MCF 10A (cell line): ENCODE measurements at regions of chr22 and their contacts with region 1.

Region 1: GRCh38 chr22:41256254-41256897 is 15.6 kb upstream of the CHADL start:
- DNase-seq: peak; percentile 89
- H3K4me3 Mint-ChIP-seq: no peak overlapping the region
- H3K27ac Mint-ChIP-seq: peak overlapping the region; percentile 75
- H3K4me1 Mint-ChIP-seq: peaks cover 9% of the 10 kb centered on the region
- H3K27me3 Mint-ChIP-seq: no peaks in the 10 kb centered on the region
- CTCF ChIP-seq: peak; percentile 35

Region 2: DNA sequence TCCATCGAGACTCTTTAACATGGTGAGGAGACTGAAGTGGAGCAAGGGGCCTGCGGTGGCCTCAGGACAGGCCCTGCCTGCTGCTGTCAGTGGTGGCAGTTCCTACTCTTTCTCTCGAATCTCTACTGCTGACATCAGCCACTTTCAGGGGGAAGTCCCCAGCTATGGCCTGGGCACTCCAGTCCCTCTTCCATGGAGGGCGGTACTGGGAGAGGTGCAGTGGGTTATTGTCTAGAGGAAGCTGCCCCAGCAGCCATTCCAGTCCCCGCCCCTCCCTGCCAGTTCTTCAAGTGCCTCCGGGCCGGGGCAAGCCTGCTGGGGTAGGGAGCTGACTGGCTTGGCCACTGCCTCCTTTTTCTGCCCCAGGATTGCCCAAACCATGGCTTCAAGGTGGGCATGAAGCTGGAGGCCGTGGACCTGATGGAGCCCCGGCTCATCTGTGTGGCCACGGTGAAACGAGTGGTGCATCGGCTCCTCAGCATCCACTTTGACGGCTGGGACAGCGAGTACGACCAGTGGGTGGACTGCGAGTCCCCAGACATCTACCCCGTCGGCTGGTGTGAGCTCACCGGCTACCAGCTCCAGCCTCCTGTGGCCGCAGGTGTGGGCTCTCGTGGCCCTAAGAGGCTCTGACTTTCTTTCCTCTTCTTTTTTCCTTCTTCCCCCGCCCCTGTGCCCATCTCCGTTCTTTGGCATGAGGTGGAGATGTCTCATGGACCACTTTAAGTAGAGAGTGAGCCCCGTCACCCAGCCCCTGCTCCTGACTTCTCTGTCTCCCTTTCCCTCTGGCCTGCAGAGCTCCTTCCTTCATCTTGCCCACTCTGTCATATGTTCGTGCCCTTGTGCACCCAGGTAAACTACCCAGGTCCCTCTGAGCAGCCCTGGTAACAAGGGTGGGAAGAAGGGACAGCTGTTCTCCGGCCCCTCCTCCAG is 29.4 kb before region 1 on chr22:
- CTCF ChIA-PET with region 1: no interaction called
- POLR2A ChIA-PET with region 1: no interaction called
- intact Hi-C with region 1: no loop called
- DNase-seq: no peak
- H3K4me3 Mint-ChIP-seq: no peak overlapping the region
- H3K27ac Mint-ChIP-seq: no peak overlapping the region
- H3K4me1 Mint-ChIP-seq: no peaks in the 10 kb centered on the region
- H3K27me3 Mint-ChIP-seq: no peaks in the 10 kb centered on the region
- CTCF ChIP-seq: no peak

Region 3: GRCh38 chr22:41301105-41302020 is 45.0 kb after region 1 on chr22 and contains the start of gene ZC3H7B:
- CTCF ChIA-PET with region 1: interaction called, 5 read pairs
- POLR2A ChIA-PET with region 1: interaction called, 3 read pairs
- intact Hi-C with region 1: loop called (anchors 1 kb)
- DNase-seq: peak; percentile 82
- H3K4me3 Mint-ChIP-seq: peak within 1 kb of the TSS; percentile 75
- H3K27ac Mint-ChIP-seq: peak within 1 kb of the TSS; percentile 90
- H3K4me1 Mint-ChIP-seq: peaks cover 26% of the 10 kb centered on the region
- H3K27me3 Mint-ChIP-seq: no peaks in the 10 kb centered on the region
- CTCF ChIP-seq: peak; percentile 38
- total RNA-seq, gene ZC3H7B: 42.9 and 53.4 TPM in 2 replicates

Region 4: DNA sequence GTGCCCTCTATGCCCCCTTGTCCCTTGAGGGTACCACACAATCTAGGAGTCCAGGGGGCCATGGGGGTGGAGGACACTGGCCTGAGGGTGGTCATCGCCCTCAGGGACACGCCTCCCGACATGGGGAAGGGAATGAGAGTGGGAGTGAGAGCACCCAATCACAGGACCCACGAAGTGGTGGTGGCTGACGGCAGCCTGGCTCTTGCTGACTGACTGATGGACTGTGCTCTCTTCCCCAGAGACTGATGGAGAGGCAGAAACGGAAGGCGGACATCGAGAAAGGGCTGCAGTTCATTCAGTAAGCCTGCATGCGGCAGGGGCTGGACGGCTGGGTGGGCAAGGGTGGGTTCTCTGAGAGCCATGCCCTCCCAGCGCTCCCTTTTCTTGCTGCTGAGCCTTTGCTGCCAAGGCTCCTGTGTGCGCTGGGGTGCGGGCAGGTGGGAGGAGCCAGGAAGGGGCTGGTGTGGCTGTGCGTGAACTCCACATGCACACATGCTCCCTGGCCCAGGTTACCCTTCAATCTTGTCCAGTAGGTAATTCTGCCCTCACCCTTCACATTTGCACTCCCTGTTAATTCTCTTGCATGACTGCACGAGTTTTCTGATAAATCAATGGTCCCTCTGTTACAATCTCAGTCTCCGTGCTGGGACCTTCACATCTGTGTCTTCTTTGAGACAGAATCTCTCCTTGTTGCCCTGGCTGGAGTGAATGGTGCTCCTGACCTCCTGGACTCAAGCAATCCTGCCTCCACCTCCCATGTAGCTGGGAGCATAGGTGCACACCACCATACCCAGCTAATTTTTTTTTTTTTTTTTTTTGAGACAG is 64.3 kb after region 1 on chr22:
- CTCF ChIA-PET with region 1: no interaction called
- POLR2A ChIA-PET with region 1: no interaction called
- intact Hi-C with region 1: no loop called
- DNase-seq: no peak
- H3K4me3 Mint-ChIP-seq: no peak overlapping the region
- H3K27ac Mint-ChIP-seq: no peak overlapping the region
- H3K4me1 Mint-ChIP-seq: no peaks in the 10 kb centered on the region
- H3K27me3 Mint-ChIP-seq: no peaks in the 10 kb centered on the region
- CTCF ChIP-seq: no peak

Region 5: GRCh38 chr22:41341990-41342389 is 85.6 kb after region 1 on chr22:
- CTCF ChIA-PET with region 1: no interaction called
- POLR2A ChIA-PET with region 1: no interaction called
- intact Hi-C with region 1: no loop called
- DNase-seq: no peak
- H3K4me3 Mint-ChIP-seq: no peak overlapping the region
- H3K27ac Mint-ChIP-seq: no peak overlapping the region
- H3K4me1 Mint-ChIP-seq: no peaks in the 10 kb centered on the region
- H3K27me3 Mint-ChIP-seq: no peaks in the 10 kb centered on the region
- CTCF ChIP-seq: no peak